Activated CD4-positive, alpha-beta memory T cell treated with anti-CD3 and anti-CD28 coated beads, Interleukin-2, amount 10 ng/mL, durations not matched to agents 7 days and 5 days (primary cell): ENCODE measurements at regions of chr3 and their contacts with region 1.

Region 1: GRCh38 chr3:53045518-53046170 is at the start of gene SFMBT1:
- DNase-seq: peak; percentile 77
- H3K4me3 Mint-ChIP-seq: peak within 1 kb of the TSS; percentile 91
- H3K27ac Mint-ChIP-seq: peak within 1 kb of the TSS; percentile 98
- H3K4me1 Mint-ChIP-seq: peaks cover 38% of the 10 kb centered on the region
- H3K27me3 Mint-ChIP-seq: peaks cover 9% of the 10 kb centered on the region
- total RNA-seq, gene SFMBT1: 28.7 to 30.0 TPM

Region 2: GRCh38 chr3:52685709-52686691 is 359.6 kb before region 1 on chr3 and contains the starts of genes GNL3 and PBRM1:
- CTCF ChIA-PET with region 1: no interaction called
- POLR2A ChIA-PET with region 1: interaction called, 11 read pairs
- DNase-seq: peak; percentile 95
- H3K4me3 Mint-ChIP-seq: peak within 1 kb of the TSS; percentile 91
- H3K27ac Mint-ChIP-seq: peak within 1 kb of the TSS; percentile 90
- H3K4me1 Mint-ChIP-seq: peaks cover 79% of the 10 kb centered on the region
- H3K27me3 Mint-ChIP-seq: no peaks in the 10 kb centered on the region
- total RNA-seq, gene GNL3: 66.8 to 67.5 TPM
- total RNA-seq, gene PBRM1: 69.0 to 70.2 TPM

Region 3: GRCh38 chr3:52897130-52898122 is 148.2 kb before region 1 on chr3 and contains the start of gene STIMATE:
- CTCF ChIA-PET with region 1: interaction called, 14 read pairs
- POLR2A ChIA-PET with region 1: interaction called, 18 read pairs
- DNase-seq: peak; percentile 89
- H3K4me3 Mint-ChIP-seq: peak within 1 kb of the TSS; percentile 99
- H3K27ac Mint-ChIP-seq: peak within 1 kb of the TSS; percentile 73
- H3K4me1 Mint-ChIP-seq: peaks cover 46% of the 10 kb centered on the region
- H3K27me3 Mint-ChIP-seq: no peaks in the 10 kb centered on the region
- total RNA-seq, gene STIMATE: 31.9 to 34.7 TPM

Region 4: DNA sequence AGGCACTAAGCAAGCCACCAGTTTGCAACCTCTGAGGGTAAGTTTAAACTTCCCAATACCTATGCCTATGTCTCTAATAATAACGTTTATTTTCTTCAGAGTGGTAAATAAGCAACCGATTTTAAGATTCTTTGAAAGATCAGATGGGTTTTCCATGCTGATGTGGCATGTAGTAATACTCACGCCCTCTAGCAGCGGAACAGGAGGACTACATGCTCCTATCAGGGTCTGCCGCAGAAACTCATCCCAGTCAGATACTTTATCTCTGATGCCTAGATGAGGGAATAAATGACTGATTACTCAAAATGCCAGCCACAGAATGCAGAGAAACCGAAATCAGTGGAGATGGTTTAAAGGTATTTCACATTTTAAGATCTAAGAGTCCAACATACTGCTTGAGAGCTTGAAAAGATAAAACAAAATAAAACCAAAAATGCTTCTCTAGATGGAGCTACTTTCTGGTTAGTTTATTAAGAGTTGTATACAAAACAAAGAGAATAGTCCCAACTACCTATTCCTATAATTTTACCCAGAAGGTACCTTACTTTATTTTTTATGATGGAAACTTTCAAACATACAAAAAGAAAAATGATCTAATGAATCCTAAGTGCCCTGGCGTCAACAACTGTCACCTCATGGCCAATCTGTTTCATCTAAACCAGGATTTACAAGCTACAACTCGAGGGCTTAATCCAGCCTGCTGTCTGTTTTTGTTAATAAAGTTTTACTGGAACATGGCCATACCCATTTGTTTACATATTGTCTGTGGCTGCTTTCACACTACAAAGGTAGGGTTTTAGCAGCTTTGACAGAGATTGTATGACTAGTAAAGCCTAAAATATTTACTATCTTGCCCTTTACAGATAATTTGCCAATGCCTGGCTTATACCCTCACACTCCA is 110.8 kb before region 1 on chr3:
- CTCF ChIA-PET with region 1: interaction called, 11 read pairs
- POLR2A ChIA-PET with region 1: interaction called, 6 read pairs
- DNase-seq: peak; percentile 52
- H3K4me3 Mint-ChIP-seq: no peak overlapping the region
- H3K27ac Mint-ChIP-seq: no peak overlapping the region
- H3K4me1 Mint-ChIP-seq: peaks cover 4% of the 10 kb centered on the region
- H3K27me3 Mint-ChIP-seq: no peaks in the 10 kb centered on the region

Region 5: DNA sequence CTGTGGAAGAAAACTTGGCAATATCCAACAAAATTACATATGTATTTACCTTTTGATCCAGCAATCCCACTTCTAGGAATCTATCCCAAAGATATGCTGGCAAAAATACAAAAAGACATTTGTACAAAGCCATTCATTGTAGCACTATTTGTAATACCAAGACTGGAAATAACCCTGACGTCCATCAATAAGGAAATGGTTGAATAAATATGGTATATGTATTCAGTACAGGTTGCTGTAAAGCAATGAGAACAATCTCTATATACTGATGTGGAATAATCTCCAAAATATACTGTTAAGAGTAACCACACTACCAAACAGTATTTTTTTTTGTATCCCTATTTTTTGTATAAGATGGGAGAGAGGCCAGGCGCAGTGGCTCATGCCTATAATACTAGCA is 83.5 kb before region 1 on chr3:
- CTCF ChIA-PET with region 1: no interaction called
- POLR2A ChIA-PET with region 1: no interaction called
- DNase-seq: no peak
- H3K4me3 Mint-ChIP-seq: no peak overlapping the region
- H3K27ac Mint-ChIP-seq: no peak overlapping the region
- H3K4me1 Mint-ChIP-seq: peaks cover 5% of the 10 kb centered on the region
- H3K27me3 Mint-ChIP-seq: no peaks in the 10 kb centered on the region

Region 6: DNA sequence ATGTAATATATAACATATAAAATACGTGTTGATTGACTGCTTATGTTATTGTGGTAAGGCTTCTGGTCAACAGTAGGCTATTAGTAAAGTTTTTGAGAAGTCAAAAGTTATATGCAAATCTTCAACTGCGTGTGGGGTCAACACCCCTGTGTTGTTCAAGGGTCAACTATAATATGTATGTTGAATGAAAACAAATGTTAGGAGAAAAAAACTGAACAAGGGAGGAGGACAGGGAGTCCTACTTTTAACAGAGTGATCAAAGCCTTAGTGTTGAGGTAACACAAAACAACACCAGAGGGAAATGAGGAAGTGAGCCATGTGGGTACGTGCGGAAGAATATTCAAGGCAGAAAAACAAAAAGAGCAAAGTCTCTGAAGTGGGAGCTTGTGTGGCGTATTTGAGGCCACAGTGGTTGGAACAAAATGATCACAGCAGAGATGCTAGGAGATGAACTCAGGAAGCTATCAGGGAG is 62.3 kb before region 1 on chr3:
- CTCF ChIA-PET with region 1: no interaction called
- POLR2A ChIA-PET with region 1: interaction called, 15 read pairs
- DNase-seq: peak; percentile 63
- H3K4me3 Mint-ChIP-seq: peak overlapping the region; percentile 12
- H3K27ac Mint-ChIP-seq: peak overlapping the region; percentile 66
- H3K4me1 Mint-ChIP-seq: peaks cover 25% of the 10 kb centered on the region
- H3K27me3 Mint-ChIP-seq: no peaks in the 10 kb centered on the region

Region 7: GRCh38 chr3:53030619-53031449 is 14.8 kb before region 1 on chr3:
- CTCF ChIA-PET with region 1: interaction called, 5 read pairs
- POLR2A ChIA-PET with region 1: interaction called, 72 read pairs
- DNase-seq: peak; percentile 58
- H3K4me3 Mint-ChIP-seq: no peak overlapping the region
- H3K27ac Mint-ChIP-seq: peak overlapping the region; percentile 53
- H3K4me1 Mint-ChIP-seq: peaks cover 35% of the 10 kb centered on the region
- H3K27me3 Mint-ChIP-seq: no peaks in the 10 kb centered on the region

Region 8: DNA sequence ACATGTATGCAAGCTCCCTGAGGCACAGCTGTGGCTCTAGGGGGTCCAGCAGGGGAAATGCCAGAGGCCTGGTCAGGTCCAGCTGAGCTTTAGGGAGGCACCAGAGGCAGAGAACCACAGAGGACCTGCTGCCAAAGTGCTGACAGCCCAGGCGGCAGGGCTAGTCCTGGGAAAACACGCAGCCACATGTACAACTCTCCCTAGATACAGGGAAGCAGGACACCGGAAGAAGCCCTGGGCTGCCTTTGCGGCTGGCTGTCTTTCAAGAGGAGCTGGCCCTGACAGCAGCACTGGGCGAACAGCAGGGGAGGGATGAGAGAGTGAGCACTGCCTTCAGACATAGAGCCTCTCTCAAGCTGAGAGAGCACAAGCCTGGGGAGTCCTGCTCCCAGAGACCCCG is 43.9 kb after region 1 on chr3:
- CTCF ChIA-PET with region 1: no interaction called
- POLR2A ChIA-PET with region 1: no interaction called
- DNase-seq: no peak
- H3K4me3 Mint-ChIP-seq: no peak overlapping the region
- H3K27ac Mint-ChIP-seq: no peak overlapping the region
- H3K4me1 Mint-ChIP-seq: no peaks in the 10 kb centered on the region
- H3K27me3 Mint-ChIP-seq: no peaks in the 10 kb centered on the region

Region 9: GRCh38 chr3:53102601-53103147 is 57.0 kb after region 1 on chr3:
- CTCF ChIA-PET with region 1: no interaction called
- POLR2A ChIA-PET with region 1: interaction called, 13 read pairs
- DNase-seq: peak; percentile 69
- H3K4me3 Mint-ChIP-seq: peak overlapping the region; percentile 63
- H3K27ac Mint-ChIP-seq: peak overlapping the region; percentile 95
- H3K4me1 Mint-ChIP-seq: peaks cover 61% of the 10 kb centered on the region
- H3K27me3 Mint-ChIP-seq: no peaks in the 10 kb centered on the region